ENCODE measurements at regions of chr10 and their contacts with region 1.

Region 1: DNA sequence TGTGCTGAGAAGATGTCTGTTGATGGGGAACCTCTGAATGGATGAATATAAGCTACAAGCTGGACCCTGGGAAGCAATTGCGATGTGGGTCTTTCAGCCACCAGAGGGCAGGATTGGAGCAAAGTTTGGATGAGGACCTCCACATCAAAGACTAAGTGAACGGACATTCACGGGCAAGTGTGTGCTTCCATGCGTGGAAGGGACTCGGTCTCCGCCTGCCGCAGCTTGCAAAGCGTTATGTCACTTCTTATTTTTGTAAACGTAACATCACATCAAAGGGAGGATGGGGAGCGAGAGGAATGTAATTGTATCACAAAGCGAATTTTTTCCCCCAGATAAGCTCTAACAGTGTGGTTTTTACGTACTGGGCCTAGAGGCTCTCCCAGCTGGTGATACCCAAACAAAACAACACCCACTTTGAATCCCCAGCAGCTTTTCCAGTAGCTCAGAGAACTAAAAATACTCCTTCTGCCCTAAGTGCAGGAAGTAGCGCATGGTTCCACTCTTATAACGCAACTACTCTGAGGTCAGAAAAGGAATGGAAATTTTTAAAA is 65.0 kb downstream of the VWA2 start:
- DNase-seq: peak; percentile 90
- H3K4me3 ChIP-seq: peak overlapping the region in 3 of 4 donors; percentile 20 to 35 (median 34)
- H3K27ac ChIP-seq: peak overlapping the region; percentile 8 to 50 (median 30)
- H3K4me1 ChIP-seq: peaks cover 0 to 17% (median 11%) of the 10 kb centered on the region in 4 donors
- H3K27me3 ChIP-seq: no peaks in the 10 kb centered on the region
- CTCF ChIP-seq: peak; percentile 53 to 76 (median 72)
- EP300 ChIP-seq: no peak
- POLR2A ChIP-seq: no peak

Region 2: DNA sequence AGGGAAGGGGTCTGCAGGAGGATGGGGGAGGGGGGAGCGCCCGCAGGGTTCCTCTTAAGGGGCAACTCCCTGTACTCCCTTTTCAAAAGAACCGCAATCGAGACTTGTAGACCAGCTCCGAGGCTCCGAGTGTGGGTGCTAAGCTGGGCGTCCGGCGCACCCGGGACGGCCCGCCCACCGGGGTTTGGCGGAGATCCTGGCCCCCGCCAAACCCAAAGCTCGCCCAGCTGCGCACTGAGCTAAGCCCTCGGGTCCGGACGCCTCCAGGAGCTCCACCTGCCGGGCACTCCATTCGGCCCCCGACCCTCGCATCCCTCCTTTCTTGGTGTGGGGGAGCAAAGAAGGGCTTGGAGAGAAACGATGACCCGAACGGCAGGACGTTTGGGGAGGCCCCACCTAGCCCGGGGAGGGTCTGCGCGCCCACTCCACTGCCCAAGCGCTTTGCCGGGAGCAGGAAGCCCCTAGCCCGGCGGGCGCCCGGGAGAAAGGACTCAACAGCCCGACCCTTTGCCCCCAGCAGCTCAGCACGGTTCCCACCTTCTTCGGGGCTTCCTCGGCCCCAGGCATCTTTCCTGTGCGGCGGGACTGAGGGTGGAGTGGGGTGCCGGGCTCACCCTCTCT is 99.6 kb after region 1 on chr10:
- intact Hi-C with region 1: loop called (anchors 2 kb)
- DNase-seq: peak; percentile 81
- H3K4me3 ChIP-seq: peak overlapping the region; percentile 46 to 62 (median 53)
- H3K27ac ChIP-seq: peak overlapping the region; percentile 71 to 78 (median 73)
- H3K4me1 ChIP-seq: peaks cover 0 to 66% (median 51%) of the 10 kb centered on the region in 4 donors
- H3K27me3 ChIP-seq: peaks cover 0 to 13% (median 5%) of the 10 kb centered on the region in 3 donors
- CTCF ChIP-seq: peak in 1 of 4 experiments; percentile 13
- EP300 ChIP-seq: no peak
- POLR2A ChIP-seq: no peak

Region 3: GRCh38 chr10:114437456-114438292 is 133.6 kb after region 1 on chr10:
- intact Hi-C with region 1: loop called (anchors 2 kb)
- DNase-seq: no peak
- H3K4me3 ChIP-seq: no peak overlapping the region
- H3K27ac ChIP-seq: no peak overlapping the region
- H3K4me1 ChIP-seq: no peaks in the 10 kb centered on the region
- H3K27me3 ChIP-seq: no peaks in the 10 kb centered on the region
- CTCF ChIP-seq: peak in 3 of 4 experiments; percentile 17 to 44 (median 35)
- EP300 ChIP-seq: no peak
- POLR2A ChIP-seq: no peak

Region 4: DNA sequence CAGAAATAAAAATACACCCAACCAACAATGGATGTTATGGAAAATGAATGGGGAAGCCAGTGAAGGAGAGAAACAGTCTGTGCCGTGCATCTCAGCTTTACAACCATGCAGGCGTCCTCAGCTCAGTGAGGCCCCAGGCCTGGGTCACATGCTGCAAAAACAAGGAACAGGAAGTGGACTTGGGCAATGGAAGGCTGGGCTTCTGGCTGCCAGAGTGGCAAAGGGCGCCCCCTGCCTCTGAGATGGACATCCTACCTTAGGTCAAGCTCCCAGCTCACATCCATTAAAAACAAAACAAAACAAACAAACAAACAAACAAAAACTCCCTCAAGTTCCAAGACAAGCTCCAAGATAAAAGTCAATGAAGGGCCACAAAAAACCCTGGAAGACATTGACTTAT is 154.9 kb after region 1 on chr10:
- intact Hi-C with region 1: loop called (anchors 1 kb)
- DNase-seq: peak; percentile 68
- H3K4me3 ChIP-seq: no peak overlapping the region
- H3K27ac ChIP-seq: no peak overlapping the region
- H3K4me1 ChIP-seq: no peaks in the 10 kb centered on the region
- H3K27me3 ChIP-seq: no peaks in the 10 kb centered on the region
- CTCF ChIP-seq: peak in 1 of 4 experiments; percentile 22
- EP300 ChIP-seq: no peak
- POLR2A ChIP-seq: no peak

Region 5: GRCh38 chr10:114550756-114551635 is 246.9 kb after region 1 on chr10:
- intact Hi-C with region 1: loop called (anchors 5 kb)
- DNase-seq: peak; percentile 74
- H3K4me3 ChIP-seq: peak overlapping the region in 3 of 4 donors; percentile 9 to 41 (median 32)
- H3K27ac ChIP-seq: peak overlapping the region; percentile 55 to 64 (median 60)
- H3K4me1 ChIP-seq: peaks cover 0 to 17% (median 14%) of the 10 kb centered on the region in 4 donors
- H3K27me3 ChIP-seq: no peaks in the 10 kb centered on the region
- CTCF ChIP-seq: peak; percentile 10 to 52 (median 47)
- EP300 ChIP-seq: no peak
- POLR2A ChIP-seq: no peak

Region 6: GRCh38 chr10:114779803-114780609 is 475.9 kb after region 1 on chr10:
- intact Hi-C with region 1: loop called (anchors 5 kb)
- DNase-seq: no peak
- H3K4me3 ChIP-seq: no peak overlapping the region
- H3K27ac ChIP-seq: peak overlapping the region in 3 of 4 donors; percentile 45 to 52 (median 51)
- H3K4me1 ChIP-seq: peaks cover 0 to 13% (median 6%) of the 10 kb centered on the region in 4 donors
- H3K27me3 ChIP-seq: no peaks in the 10 kb centered on the region
- CTCF ChIP-seq: no peak
- EP300 ChIP-seq: no peak
- POLR2A ChIP-seq: no peak

Region 7: DNA sequence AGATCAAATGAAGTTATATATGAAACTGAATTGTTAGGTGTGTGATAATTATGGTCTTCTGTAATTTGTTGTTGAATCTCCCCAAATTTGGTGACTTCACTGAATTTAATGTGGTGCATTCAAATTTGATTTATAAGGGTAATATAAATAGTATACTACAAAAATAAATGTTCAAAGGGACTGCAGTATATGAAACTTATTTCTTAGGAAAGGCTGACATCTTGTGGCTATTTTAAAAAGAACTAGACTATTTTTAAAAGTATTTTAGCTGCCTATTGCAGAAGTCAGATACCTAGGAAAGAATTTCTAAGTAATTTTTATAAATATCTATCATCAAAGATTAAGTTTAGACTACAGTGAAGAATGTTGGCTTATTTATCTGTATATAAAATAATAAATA is 825.7 kb after region 1 on chr10:
- intact Hi-C with region 1: loop called (anchors 5 kb)
- DNase-seq: no peak
- H3K4me3 ChIP-seq: no peak overlapping the region
- H3K27ac ChIP-seq: no peak overlapping the region
- H3K4me1 ChIP-seq: no peaks in the 10 kb centered on the region
- H3K27me3 ChIP-seq: no peaks in the 10 kb centered on the region
- CTCF ChIP-seq: peak in 2 of 4 experiments; percentile 13 to 18
- EP300 ChIP-seq: no peak
- POLR2A ChIP-seq: no peak

Measured in sigmoid colon (tissue), 7 donors.